ENCODE measurements at regions of chr15 and their contacts with region 1.

Region 1: GRCh38 chr15:90031231-90031791 is 30.2 kb downstream of the ZNF710 start:
- DNase-seq: no peak
- H3K4me3 Mint-ChIP-seq: no peak overlapping the region
- H3K27ac Mint-ChIP-seq: no peak overlapping the region
- H3K4me1 Mint-ChIP-seq: peaks cover 49% of the 10 kb centered on the region
- H3K27me3 Mint-ChIP-seq: no peaks in the 10 kb centered on the region
- CTCF ChIP-seq: no peak

Region 2: DNA sequence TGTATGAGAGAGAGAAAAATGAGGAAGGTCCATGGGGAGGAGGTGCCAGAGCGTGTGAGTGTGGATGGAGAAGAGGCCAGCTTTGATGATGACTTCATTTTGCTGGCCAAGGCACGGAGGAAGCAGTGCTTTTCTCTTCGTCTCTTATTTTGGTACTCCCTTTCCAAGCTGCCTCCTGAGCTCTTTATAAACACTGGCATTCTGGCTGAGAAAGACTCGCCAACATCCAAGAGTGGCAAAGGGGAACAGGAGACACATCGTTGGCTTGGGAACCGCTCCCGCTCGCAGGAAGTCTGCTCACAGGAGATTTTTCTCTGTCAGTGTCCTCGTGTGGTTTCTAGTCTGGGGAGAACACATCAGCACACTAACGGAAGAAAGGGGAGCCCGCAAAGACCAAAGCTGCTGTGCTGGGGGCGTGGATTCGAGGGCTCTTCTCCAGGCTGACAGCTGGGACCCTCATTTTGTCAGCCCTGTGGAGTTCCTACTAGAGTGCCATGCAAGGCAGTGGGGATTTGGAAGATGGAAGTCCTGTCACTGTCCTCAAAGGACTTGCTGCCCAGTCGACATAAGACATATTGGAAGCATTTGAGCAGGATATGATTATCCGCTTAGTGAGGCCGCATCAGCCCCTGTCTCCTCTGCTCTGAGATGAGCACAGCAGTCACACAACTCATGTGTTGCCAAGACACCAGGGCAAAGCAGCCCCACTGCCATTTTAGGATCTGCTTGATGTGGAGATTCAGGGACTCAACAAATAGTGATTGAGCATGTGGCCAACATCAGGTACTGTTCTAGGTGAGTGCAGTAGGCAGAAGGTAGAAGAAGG is 161.9 kb after region 1 on chr15:
- CTCF ChIA-PET with region 1: interaction called, 10 read pairs
- intact Hi-C with region 1: no loop called
- DNase-seq: no peak
- H3K4me3 Mint-ChIP-seq: no peak overlapping the region
- H3K27ac Mint-ChIP-seq: no peak overlapping the region
- H3K4me1 Mint-ChIP-seq: peaks cover 32% of the 10 kb centered on the region
- H3K27me3 Mint-ChIP-seq: no peaks in the 10 kb centered on the region
- CTCF ChIP-seq: no peak